ENCODE measurements at regions of chr14 and their contacts with region 1.

Region 1: GRCh38 chr14:44833376-44834060 is 128.2 kb downstream of the KLHL28 start:
- DNase-seq: peak; percentile 54
- H3K4me3 Mint-ChIP-seq: no peak overlapping the region
- H3K27ac Mint-ChIP-seq: no peak overlapping the region
- H3K4me1 Mint-ChIP-seq: peaks cover 9% of the 10 kb centered on the region
- H3K27me3 Mint-ChIP-seq: no peaks in the 10 kb centered on the region
- CTCF ChIP-seq: no peak

Region 2: DNA sequence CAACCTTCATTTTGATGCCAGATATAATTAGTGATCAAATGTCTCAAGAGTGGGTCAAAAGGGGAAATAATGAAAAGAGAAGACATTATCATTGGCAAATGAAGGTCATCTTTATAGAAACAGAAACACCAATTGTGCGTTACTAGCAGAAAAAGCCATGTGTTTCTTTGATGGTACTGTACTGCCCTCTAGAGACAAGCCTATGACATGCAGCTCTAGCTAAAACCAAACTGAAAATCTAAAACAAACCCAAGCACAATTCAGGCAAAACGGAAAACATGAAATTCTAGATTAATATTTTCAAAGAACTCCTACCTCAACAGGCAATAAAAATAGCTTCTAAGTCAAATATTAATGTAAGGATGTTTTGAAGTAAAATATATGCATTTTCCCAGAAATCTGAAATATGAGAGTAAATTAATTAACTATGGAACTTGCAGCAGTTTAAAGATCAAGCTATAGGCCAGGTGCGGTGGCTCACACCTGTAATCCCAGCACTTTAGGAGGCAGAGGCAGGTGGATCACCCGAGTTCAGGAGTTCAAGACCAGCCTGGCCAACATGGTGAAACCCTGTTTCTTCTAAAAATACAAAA is 12.8 kb after region 1 on chr14:
- CTCF ChIA-PET with region 1: interaction called, 16 read pairs
- POLR2A ChIA-PET with region 1: no interaction called
- intact Hi-C with region 1: no loop called
- DNase-seq: peak; percentile 65
- H3K4me3 Mint-ChIP-seq: no peak overlapping the region
- H3K27ac Mint-ChIP-seq: no peak overlapping the region
- H3K4me1 Mint-ChIP-seq: no peaks in the 10 kb centered on the region
- H3K27me3 Mint-ChIP-seq: no peaks in the 10 kb centered on the region
- CTCF ChIP-seq: peak; percentile 76